ENCODE measurements at regions of chr22 and their contacts with region 1.

Region 1: DNA sequence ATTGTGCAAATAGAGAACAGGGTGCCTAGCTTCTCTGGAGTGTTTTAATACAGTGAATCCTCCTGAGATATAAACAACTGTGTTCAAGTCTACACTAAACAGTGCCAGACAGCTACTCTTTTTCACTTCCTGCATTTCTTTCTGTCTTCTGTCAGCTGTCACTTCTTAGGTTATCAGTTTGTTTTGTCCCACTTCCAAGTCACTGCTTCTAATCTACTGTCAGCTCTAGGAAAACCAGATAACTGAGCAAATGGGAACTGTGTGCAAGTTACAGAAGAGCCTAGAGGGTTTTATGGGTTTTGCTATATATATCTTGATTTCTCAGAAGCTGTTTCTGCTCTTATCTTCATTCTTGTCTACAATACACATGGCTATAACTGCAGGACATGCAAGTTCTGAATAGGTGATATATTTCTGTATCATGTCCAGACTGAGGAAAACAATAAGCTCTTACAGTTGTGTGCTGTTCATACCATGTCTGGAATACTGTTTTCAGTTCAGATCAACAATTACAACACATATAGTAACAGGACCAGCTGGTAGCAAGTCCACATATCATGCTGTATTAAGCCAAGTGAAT is 5.8 kb downstream of the PITPNB start:
- DNase-seq: no peak
- H3K4me3 ChIP-seq: no peak overlapping the region
- CTCF ChIP-seq: no peak

Region 2: DNA sequence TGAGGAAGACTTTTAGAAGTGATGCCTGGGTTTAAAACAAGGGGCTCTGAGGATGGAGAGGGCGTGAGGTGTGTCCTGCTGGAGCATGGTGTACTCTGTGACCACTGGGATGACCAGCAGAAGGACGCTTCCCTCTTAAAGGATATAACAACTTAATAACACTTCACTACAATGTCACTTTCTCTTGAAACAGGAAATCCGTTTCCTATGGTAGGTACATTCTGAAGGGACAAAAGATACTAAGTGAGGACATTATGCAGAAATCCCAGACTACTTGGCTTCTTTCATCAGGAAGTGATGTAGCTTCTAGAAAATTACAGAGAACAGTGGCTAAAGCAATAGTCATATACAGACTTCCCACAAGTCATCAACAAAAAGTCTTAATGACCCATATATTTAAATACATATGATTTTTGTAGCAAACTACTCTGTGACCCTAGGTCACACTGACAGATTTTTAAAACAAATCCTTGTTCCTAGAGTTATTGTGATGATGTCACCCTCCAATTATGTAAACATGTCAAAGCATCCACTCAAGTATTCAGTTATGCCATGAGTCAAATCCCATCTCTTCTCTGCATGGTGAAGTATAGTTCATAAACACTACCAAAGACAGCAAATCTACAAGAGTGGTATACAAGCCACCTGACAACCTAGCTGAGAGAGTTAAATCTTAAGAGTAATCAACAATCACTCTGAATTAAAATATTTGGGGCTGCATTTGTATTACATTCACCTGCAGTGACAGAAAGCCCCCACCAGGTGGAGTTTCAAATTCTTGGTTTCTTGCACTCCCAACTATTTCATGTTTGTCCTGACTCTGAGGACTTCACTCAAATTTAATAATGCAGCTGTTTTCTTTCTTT is 27.0 kb before region 1 on chr22:
- CTCF ChIA-PET with region 1: interaction called, 13 read pairs
- POLR2A ChIA-PET with region 1: no interaction called
- DNase-seq: peak; percentile 59
- H3K4me3 ChIP-seq: no peak overlapping the region
- CTCF ChIP-seq: peak; percentile 45

Measured in AG04449 (cell line).